ENCODE measurements at regions of chr1 and their contacts with region 1.

Region 1: DNA sequence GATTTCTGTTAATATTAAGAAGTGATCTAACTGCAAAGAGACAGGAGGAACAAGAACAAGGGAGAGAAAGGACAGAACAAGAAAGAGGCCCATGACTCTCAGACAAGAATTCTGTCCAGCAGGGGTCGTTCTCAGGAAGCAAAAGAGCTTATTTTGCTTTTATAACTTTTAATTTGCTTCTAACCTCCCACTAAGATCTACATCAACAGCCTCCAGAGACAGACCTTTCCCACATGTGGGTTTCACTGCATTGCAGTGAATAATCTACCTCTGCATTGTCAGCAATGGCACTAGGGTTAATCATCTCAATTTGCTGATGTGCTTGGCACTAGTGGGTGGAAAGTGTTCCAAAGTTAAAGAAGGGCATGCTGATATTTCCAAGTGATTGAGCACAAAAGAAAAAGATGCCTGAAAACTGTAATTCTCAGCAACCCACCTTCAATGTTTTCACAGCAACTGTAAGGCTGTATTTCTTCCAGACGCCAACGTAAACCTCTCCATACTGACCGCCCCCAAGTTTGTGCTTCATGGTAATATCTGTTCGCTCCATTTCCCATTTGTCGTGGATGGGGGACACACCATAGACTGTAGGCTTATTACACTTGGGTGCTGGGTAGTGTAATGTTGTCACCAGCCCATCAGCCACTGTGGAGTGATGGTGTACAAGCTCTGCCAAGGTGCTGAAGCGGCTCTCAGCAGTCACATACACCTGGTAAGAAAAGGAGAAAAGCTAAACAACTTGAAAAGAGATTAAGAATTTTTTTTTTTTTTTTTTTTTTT is 39.5 kb downstream of the TOR3A start:
- DNase-seq: no peak
- H3K4me3 ChIP-seq: no peak overlapping the region
- H3K27ac ChIP-seq: no peak overlapping the region
- H3K4me1 ChIP-seq: peaks cover 0 to 4% (median 3%) of the 10 kb centered on the region in 4 donors
- H3K27me3 ChIP-seq: no peaks in the 10 kb centered on the region
- CTCF ChIP-seq: peak; percentile 61 to 67 (median 66)
- EP300 ChIP-seq: no peak
- POLR2A ChIP-seq: no peak

Region 2: GRCh38 chr1:178908358-178908757 is 213.0 kb before region 1 on chr1:
- intact Hi-C with region 1: no loop called
- DNase-seq: no peak
- H3K4me3 ChIP-seq: no peak overlapping the region
- H3K27ac ChIP-seq: no peak overlapping the region
- H3K4me1 ChIP-seq: peaks cover 0 to 6% (median 0%) of the 10 kb centered on the region in 4 donors
- H3K27me3 ChIP-seq: no peaks in the 10 kb centered on the region
- CTCF ChIP-seq: no peak
- EP300 ChIP-seq: no peak
- POLR2A ChIP-seq: no peak

Region 3: DNA sequence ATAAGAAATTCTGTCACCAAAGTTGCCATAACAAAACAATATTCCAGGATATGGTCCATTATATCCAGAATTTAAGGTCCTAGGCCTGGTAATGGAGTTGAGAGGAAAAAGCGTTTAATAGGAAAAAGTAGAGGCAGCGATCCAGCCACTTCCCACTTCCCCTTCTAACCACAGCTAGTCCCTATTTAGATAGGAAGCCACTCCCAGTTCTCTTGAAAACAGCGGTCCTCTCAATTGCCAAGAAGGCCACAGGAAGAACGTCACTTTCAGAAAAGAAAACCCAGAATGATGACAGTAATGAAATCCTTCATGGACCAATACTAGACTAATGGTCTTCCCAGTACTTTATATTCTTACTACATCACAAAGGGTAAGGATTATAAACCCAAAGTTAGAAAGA is 69.5 kb after region 1 on chr1:
- intact Hi-C with region 1: loop called (anchors 5 kb)
- DNase-seq: no peak
- H3K4me3 ChIP-seq: no peak overlapping the region
- H3K27ac ChIP-seq: peak overlapping the region in 3 of 4 donors; percentile 24 to 58 (median 57)
- H3K4me1 ChIP-seq: peaks cover 5 to 11% (median 6%) of the 10 kb centered on the region in 4 donors
- H3K27me3 ChIP-seq: no peaks in the 10 kb centered on the region
- CTCF ChIP-seq: no peak
- EP300 ChIP-seq: no peak
- POLR2A ChIP-seq: no peak

Measured in esophagus muscularis mucosa (tissue), 4 donors.